Sciatic nerve (tissue), 2 donors: ENCODE measurements at regions of chr11 and their contacts with region 1.

Region 1: GRCh38 chr11:7683571-7683970 is 10.3 kb upstream of the CYB5R2 start:
- DNase-seq: no peak
- ATAC-seq: no peak

Region 2: GRCh38 chr11:8928981-8929565 is 1245.5 kb after region 1 on chr11:
- intact Hi-C with region 1: loop called (anchors 5 kb)
- DNase-seq: no peak
- ATAC-seq: no peak